ENCODE measurements at regions of chrX and their contacts with region 1.

Region 1: GRCh38 chrX:120380699-120381098 is 18.8 kb downstream of the ATP1B4 start:
- DNase-seq: peak; percentile 43
- H3K4me3 Mint-ChIP-seq: no peak overlapping the region
- H3K27ac Mint-ChIP-seq: no peak overlapping the region
- H3K4me1 Mint-ChIP-seq: peaks cover 10% of the 10 kb centered on the region
- H3K27me3 Mint-ChIP-seq: peaks cover 9% of the 10 kb centered on the region
- CTCF ChIP-seq: peak; percentile 43

Region 2: DNA sequence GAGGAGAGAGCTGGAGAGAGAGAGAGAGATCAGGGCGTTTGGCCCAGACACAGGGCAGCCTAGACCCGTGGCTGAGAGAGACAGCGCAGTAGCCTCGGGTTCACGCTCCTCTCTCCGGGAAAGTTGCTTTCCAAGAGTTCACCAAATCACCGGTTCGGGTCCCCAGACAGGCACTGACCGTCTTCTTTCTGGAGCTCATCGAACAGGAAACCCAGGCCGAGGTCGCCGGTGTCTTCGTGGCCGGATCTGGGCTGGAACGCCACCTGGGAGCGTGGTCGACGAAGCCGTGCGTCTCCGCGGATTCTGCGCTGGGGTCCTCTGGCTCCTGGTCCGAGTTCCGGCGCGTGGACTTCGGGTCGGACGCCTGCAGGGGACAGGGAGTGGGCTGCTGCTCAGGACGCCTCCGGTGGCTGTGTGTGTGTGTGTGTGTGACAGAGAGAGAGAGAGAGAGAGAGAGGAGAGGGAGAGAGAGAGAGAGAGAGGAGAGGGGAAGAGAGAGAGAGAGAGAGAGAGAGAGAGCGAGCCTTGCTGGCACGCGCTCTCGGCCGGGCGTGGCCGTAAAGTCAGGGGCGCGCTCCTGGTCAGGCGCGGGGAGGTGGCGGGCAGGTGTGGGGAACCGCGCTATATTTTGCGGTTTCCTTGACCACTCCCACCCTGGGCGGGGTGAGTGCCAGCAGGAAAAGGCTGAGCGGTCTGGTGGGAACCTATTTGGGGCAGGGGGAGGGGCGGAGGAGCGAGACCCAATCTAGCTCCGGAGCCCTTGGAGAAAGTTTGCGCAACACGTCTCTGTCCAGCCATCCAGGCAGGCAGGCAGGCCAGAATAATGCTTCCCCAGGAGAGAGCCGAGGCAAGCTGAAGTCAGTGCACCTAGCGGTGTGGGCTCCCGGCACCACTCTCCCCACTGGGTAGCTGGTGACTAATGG is 365.3 kb before region 1 on chrX:
- CTCF ChIA-PET with region 1: no interaction called
- intact Hi-C with region 1: no loop called
- DNase-seq: peak; percentile 16
- H3K4me3 Mint-ChIP-seq: peak overlapping the region; percentile 79
- H3K27ac Mint-ChIP-seq: peak overlapping the region; percentile 37
- H3K4me1 Mint-ChIP-seq: peaks cover 13% of the 10 kb centered on the region
- H3K27me3 Mint-ChIP-seq: peaks cover 44% of the 10 kb centered on the region
- CTCF ChIP-seq: no peak

Region 3: DNA sequence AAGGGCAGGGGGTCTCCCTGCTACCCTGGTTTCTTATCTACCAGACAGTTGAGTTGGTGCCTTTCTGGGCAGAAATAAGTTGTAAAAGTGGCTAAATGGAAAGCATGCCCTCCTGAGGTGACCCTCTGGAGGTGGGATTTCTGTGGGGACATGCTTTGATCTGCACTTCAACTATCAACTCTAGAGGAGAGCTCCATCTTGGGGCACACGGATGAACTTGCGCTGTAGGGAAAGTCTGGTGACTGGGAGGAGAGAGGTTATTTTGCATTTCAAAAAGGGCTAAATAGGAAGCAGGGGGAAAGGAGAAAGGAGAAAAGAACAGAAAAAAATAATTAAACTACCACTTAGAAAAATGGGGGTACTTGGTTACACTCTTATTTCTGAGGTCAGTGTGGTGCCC is 290.5 kb before region 1 on chrX:
- CTCF ChIA-PET with region 1: no interaction called
- intact Hi-C with region 1: no loop called
- DNase-seq: no peak
- H3K4me3 Mint-ChIP-seq: no peak overlapping the region
- H3K27ac Mint-ChIP-seq: no peak overlapping the region
- H3K4me1 Mint-ChIP-seq: peaks cover 15% of the 10 kb centered on the region
- H3K27me3 Mint-ChIP-seq: peaks cover 38% of the 10 kb centered on the region
- CTCF ChIP-seq: no peak

Region 4: DNA sequence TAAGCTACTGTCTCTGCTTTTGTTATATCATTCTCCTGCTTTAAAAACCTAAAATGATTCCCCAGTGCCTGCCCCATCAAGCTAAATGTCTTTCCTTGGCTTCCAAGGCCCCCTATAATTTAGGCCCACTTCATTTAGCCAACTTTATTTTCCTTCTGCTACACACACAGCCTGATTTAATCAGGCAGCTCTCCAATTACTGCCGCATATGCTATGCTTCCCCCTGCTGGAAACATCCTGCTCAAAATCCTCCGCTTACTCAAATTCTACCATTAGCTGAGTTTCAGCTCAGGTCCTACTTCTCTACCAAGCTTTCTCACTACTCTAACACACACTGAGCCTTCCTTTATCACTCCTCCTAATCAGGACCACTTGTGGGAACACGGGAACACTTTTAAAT is 71.4 kb after region 1 on chrX:
- CTCF ChIA-PET with region 1: interaction called, 4 read pairs
- intact Hi-C with region 1: loop called (anchors 2 kb)
- DNase-seq: no peak
- H3K4me3 Mint-ChIP-seq: no peak overlapping the region
- H3K27ac Mint-ChIP-seq: no peak overlapping the region
- H3K4me1 Mint-ChIP-seq: no peaks in the 10 kb centered on the region
- H3K27me3 Mint-ChIP-seq: no peaks in the 10 kb centered on the region
- CTCF ChIP-seq: no peak

Region 5: DNA sequence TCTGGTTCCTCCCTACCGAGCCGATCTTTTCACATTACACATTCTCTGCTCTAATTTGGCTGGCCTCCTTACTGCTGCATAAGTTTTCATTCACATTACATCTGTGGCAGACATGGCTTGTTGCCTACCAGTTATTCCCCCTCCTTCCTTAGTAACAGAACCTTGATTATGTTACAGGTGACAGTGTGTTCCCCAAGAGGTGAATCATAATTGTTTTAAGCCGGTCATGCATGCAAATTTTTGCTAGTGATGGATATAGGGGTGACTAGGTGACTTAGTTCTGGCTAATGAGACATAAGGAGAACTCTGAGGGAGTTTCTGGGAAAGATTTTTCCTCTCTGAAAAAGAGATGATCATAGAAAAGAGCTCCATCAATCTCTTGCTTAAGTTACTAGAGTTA is 96.8 kb after region 1 on chrX:
- CTCF ChIA-PET with region 1: interaction called, 5 read pairs
- intact Hi-C with region 1: loop called (anchors 1 kb)
- DNase-seq: no peak
- H3K4me3 Mint-ChIP-seq: no peak overlapping the region
- H3K27ac Mint-ChIP-seq: no peak overlapping the region
- H3K4me1 Mint-ChIP-seq: no peaks in the 10 kb centered on the region
- H3K27me3 Mint-ChIP-seq: no peaks in the 10 kb centered on the region
- CTCF ChIP-seq: no peak

Region 6: DNA sequence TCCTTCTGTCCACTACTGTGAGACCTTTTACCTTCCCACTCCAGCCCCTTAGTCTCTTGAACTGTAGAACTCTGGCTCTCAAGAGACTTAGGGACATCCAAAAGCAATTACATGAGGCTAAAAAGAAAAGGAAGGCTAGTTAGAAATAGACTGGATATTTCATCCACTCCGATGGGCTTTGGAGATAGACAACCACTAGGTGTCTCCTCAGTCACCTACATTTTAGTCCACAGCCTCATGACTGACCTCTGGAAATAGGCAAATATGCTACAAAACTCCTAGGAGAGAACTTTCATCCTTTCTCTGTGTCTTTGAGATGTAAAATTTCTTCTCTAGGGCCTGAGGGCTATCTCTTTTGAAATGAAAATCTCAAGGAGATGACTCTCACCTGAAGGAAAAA is 133.5 kb after region 1 on chrX:
- CTCF ChIA-PET with region 1: no interaction called
- intact Hi-C with region 1: no loop called
- DNase-seq: peak; percentile 8
- H3K4me3 Mint-ChIP-seq: no peak overlapping the region
- H3K27ac Mint-ChIP-seq: no peak overlapping the region
- H3K4me1 Mint-ChIP-seq: peaks cover 38% of the 10 kb centered on the region
- H3K27me3 Mint-ChIP-seq: no peaks in the 10 kb centered on the region
- CTCF ChIP-seq: peak; percentile 51

Measured in Calu3 (cell line).